AG04449 (cell line): ENCODE measurements at regions of chr16 and their contacts with region 1.

Region 1: GRCh38 chr16:77236063-77236511 is 36.9 kb downstream of the SYCE1L start:
- DNase-seq: no peak
- H3K4me3 ChIP-seq: peak overlapping the region; percentile 42
- CTCF ChIP-seq: peak; percentile 100

Region 2: DNA sequence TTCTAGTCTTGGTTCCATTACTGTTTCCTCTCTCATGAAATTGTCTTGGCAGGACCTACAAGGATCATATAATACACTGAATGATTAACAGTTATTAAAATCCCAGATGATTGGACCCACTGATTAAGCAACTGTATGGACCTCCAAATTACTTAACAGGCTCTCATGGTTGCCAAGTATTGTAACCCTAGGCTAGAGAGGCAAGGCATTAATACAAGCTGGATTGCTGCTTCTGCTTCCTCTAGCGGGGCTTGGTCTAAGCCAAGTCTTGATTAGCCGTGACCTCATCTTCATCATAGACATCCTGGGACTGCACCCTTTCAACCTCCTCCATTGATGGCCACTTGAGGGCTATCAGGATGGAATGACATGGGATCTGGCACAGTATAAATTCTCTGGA is 10.1 kb after region 1 on chr16:
- CTCF ChIA-PET with region 1: interaction called, 21 read pairs
- POLR2A ChIA-PET with region 1: no interaction called
- DNase-seq: no peak
- H3K4me3 ChIP-seq: no peak overlapping the region
- CTCF ChIP-seq: no peak

Region 3: DNA sequence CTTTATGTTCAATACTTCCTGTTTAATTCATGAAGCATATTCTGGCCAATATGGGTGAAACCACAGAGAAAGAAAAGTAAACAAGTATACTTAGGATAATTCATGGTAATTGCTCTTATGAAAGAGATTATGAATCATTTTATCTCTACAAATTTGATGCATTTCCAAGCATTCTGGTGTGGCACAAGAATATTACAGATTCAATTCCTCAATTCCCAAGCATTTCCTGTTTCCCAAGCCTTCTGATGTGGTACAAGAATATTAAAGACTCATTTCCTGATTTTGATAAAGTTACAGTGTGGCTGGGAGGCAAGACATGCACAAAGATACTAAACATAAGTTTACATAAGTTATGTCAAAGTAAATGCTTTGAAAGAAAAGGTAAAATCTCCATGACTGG is 360.2 kb after region 1 on chr16:
- CTCF ChIA-PET with region 1: interaction called, 520 read pairs
- POLR2A ChIA-PET with region 1: no interaction called
- DNase-seq: no peak
- H3K4me3 ChIP-seq: no peak overlapping the region
- CTCF ChIP-seq: no peak

Region 4: DNA sequence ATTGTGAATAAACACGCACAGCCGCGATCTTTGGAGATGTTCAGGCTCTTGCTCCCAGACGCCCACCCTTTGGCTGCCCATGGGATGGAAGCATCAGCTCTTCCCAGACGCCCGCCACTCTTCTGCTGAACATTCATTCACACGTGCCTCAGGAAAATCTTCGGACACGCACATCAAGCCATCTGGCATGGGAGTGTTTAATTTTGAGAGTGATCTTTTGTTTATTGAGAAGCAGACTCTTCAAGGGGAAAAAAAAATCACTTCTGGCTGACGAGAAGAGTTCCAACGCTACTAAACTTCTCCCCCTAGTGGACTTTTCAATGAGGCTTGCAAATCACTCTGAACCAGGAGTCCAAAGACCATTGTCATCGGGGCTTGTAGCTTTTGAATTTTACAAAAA is 424.2 kb after region 1 on chr16:
- CTCF ChIA-PET with region 1: interaction called, 26 read pairs
- POLR2A ChIA-PET with region 1: no interaction called
- DNase-seq: no peak
- H3K4me3 ChIP-seq: no peak overlapping the region
- CTCF ChIP-seq: peak; percentile 60